CD8-positive, alpha-beta T cell (primary cell): ENCODE measurements at regions of chrX and their contacts with region 1.

Region 1: GRCh38 chrX:79146640-79147390 is 2.3 kb downstream of the GPR174 start:
- DNase-seq: peak in 2 of 9 experiments; percentile 36 to 63
- ATAC-seq: peak; percentile 6
- H3K4me3 ChIP-seq: peak overlapping the region; percentile 73 to 83
- H3K4me3 Mint-ChIP-seq: peak overlapping the region; percentile 97
- H3K27ac ChIP-seq: peak overlapping the region; percentile 67 to 83
- H3K27ac Mint-ChIP-seq: peak overlapping the region; percentile 97
- H3K4me1 ChIP-seq: peaks cover 31% of the 10 kb centered on the region
- H3K4me1 Mint-ChIP-seq: peaks cover 35% of the 10 kb centered on the region
- H3K27me3 ChIP-seq: no peaks in the 10 kb centered on the region
- H3K27me3 Mint-ChIP-seq: no peaks in the 10 kb centered on the region
- CTCF ChIP-seq: no peak

Region 2: GRCh38 chrX:79081895-79082512 is 64.8 kb before region 1 on chrX:
- CTCF ChIA-PET with region 1: interaction called, 4 read pairs
- POLR2A ChIA-PET with region 1: interaction called, 4 read pairs
- intact Hi-C with region 1: loop called in 1 of 2 experiments (anchors 2 kb)
- DNase-seq: peak in 6 of 9 experiments; percentile 6 to 79 (median 30)
- ATAC-seq: peak; percentile 89
- H3K4me3 ChIP-seq: no peak overlapping the region
- H3K4me3 Mint-ChIP-seq: peak overlapping the region; percentile 74
- H3K27ac ChIP-seq: peak overlapping the region in 1 of 2 experiments; percentile 9
- H3K27ac Mint-ChIP-seq: peak overlapping the region; percentile 94
- H3K4me1 ChIP-seq: peaks cover 27% of the 10 kb centered on the region
- H3K4me1 Mint-ChIP-seq: peaks cover 30% of the 10 kb centered on the region
- H3K27me3 ChIP-seq: no peaks in the 10 kb centered on the region
- H3K27me3 Mint-ChIP-seq: no peaks in the 10 kb centered on the region
- CTCF ChIP-seq: peak; percentile 54

Region 3: DNA sequence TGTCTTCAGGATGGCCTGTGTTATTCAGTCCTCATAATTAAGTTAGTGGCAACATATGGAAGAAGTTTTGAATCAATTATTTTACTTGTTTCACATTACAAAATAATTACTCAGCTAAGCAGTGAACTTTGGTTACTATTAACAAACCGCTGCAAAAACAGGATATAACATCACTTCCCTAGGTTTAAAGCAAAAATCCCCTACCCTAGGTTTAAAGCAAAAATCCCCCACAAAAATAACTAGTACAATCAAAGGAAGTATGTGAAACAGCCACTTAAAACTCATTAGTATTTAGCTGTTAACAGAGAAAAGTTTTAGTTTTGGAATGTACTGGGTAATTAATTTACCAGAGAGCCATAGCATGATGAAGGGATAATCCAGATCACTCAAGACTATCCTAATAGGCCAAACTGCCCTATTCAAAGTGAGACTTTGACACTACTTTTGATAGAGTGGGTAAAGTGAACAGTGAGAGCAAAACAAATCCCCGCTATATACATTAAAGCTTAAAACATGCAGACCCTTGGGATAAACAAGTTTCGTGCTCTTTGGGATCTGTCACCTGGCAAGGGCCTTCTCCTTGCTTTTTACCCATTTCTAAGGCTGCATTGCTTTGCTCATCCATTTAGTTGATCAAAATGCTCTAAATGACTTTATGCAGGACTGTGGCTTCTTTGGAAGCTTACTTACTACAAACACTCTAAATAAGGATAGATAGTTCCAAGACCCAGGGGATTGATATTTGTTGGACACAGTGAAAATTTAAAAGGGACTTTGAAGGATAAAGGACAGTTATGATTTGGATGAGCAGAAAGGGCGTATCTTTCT is 38.7 kb before region 1 on chrX:
- CTCF ChIA-PET with region 1: no interaction called
- POLR2A ChIA-PET with region 1: interaction called, 9 read pairs
- intact Hi-C with region 1: loop called (anchors 2 to 5 kb)
- DNase-seq: peak in 2 of 9 experiments; percentile 69 to 84
- ATAC-seq: peak; percentile 89
- H3K4me3 ChIP-seq: peak overlapping the region; percentile 15 to 20
- H3K4me3 Mint-ChIP-seq: peak overlapping the region; percentile 68
- H3K27ac ChIP-seq: peak overlapping the region; percentile 80 to 99
- H3K27ac Mint-ChIP-seq: peak overlapping the region; percentile 98
- H3K4me1 ChIP-seq: peaks cover 59% of the 10 kb centered on the region
- H3K4me1 Mint-ChIP-seq: peaks cover 57% of the 10 kb centered on the region
- H3K27me3 ChIP-seq: no peaks in the 10 kb centered on the region
- H3K27me3 Mint-ChIP-seq: no peaks in the 10 kb centered on the region
- CTCF ChIP-seq: no peak

Region 4: DNA sequence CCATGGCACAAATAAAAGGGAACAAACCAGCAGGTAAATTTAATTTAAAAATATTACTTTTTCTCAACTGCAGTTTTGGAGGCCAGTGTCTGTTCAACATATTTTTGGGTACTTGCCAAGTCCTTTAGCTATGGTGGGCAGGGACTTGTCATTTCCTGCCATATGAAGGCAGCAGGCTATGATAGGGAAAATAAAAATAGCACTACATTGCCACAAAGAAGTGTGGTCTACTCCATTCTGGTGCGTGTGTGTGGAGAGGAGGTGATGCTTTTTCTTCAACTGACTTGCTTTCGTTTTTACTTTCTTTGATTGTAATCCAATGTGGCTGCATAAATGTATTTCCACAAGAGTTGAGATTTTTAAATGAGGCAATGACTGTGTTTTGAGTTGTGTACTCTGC is 14.8 kb after region 1 on chrX:
- CTCF ChIA-PET with region 1: no interaction called
- POLR2A ChIA-PET with region 1: interaction called, 10 read pairs
- intact Hi-C with region 1: loop called in 1 of 2 experiments (anchors 2 kb)
- DNase-seq: peak in 8 of 9 experiments; percentile 14 to 91 (median 36)
- ATAC-seq: peak; percentile 87
- H3K4me3 ChIP-seq: peak overlapping the region; percentile 27 to 32
- H3K4me3 Mint-ChIP-seq: peak overlapping the region; percentile 85
- H3K27ac ChIP-seq: peak overlapping the region; percentile 58 to 83
- H3K27ac Mint-ChIP-seq: peak overlapping the region; percentile 97
- H3K4me1 ChIP-seq: peaks cover 70% of the 10 kb centered on the region
- H3K4me1 Mint-ChIP-seq: peaks cover 73% of the 10 kb centered on the region
- H3K27me3 ChIP-seq: no peaks in the 10 kb centered on the region
- H3K27me3 Mint-ChIP-seq: no peaks in the 10 kb centered on the region
- CTCF ChIP-seq: no peak

Region 5: GRCh38 chrX:79182616-79183015 is 35.8 kb after region 1 on chrX:
- CTCF ChIA-PET with region 1: no interaction called
- POLR2A ChIA-PET with region 1: no interaction called
- intact Hi-C with region 1: loop called in 1 of 2 experiments (anchors 5 kb)
- DNase-seq: no peak
- ATAC-seq: peak; percentile 46
- H3K4me3 ChIP-seq: no peak overlapping the region
- H3K4me3 Mint-ChIP-seq: peak overlapping the region; percentile 37
- H3K27ac ChIP-seq: peak overlapping the region in 1 of 2 experiments; percentile 63
- H3K27ac Mint-ChIP-seq: peak overlapping the region; percentile 89
- H3K4me1 ChIP-seq: peaks cover 40% of the 10 kb centered on the region
- H3K4me1 Mint-ChIP-seq: peaks cover 65% of the 10 kb centered on the region
- H3K27me3 ChIP-seq: no peaks in the 10 kb centered on the region
- H3K27me3 Mint-ChIP-seq: no peaks in the 10 kb centered on the region
- CTCF ChIP-seq: no peak

Region 6: DNA sequence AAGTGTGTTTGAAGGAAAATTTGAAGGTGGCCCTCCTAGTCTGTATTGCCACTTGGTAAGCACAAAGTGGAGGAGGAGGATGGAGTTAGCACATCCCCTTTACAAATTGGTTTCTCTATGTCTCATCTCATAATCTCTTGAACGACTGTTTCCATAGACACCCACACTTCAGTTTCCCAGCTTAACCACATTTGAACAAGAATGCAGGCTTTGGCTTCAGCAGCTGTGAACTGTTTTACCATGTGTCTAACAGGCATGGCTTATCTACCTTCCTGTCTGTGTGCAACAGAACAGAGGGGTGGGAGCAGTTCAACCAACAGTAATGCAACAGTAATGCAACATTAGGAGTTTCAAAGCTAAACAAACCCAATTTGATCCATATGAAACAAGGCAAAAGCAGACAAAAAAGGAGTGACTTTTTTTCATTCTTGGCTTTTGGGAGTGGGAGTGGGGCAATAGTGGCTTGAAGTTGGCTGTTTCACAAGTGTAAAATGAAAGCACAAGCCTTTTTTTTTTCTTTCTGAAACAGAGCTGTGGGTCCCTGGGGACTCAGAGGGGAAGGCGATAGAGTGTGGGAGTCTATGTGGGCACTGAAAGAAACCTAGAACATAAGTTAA is 112.4 kb after region 1 on chrX:
- CTCF ChIA-PET with region 1: interaction called, 8 read pairs
- POLR2A ChIA-PET with region 1: interaction called, 4 read pairs
- intact Hi-C with region 1: loop called in 1 of 2 experiments (anchors 5 kb)
- DNase-seq: peak; percentile 13 to 89 (median 40)
- ATAC-seq: peak; percentile 86
- H3K4me3 ChIP-seq: peak overlapping the region; percentile 22 to 36
- H3K4me3 Mint-ChIP-seq: peak overlapping the region; percentile 66
- H3K27ac ChIP-seq: peak overlapping the region; percentile 57 to 73
- H3K27ac Mint-ChIP-seq: peak overlapping the region; percentile 94
- H3K4me1 ChIP-seq: peaks cover 75% of the 10 kb centered on the region
- H3K4me1 Mint-ChIP-seq: peaks cover 81% of the 10 kb centered on the region
- H3K27me3 ChIP-seq: no peaks in the 10 kb centered on the region
- H3K27me3 Mint-ChIP-seq: no peaks in the 10 kb centered on the region
- CTCF ChIP-seq: no peak

Region 7: DNA sequence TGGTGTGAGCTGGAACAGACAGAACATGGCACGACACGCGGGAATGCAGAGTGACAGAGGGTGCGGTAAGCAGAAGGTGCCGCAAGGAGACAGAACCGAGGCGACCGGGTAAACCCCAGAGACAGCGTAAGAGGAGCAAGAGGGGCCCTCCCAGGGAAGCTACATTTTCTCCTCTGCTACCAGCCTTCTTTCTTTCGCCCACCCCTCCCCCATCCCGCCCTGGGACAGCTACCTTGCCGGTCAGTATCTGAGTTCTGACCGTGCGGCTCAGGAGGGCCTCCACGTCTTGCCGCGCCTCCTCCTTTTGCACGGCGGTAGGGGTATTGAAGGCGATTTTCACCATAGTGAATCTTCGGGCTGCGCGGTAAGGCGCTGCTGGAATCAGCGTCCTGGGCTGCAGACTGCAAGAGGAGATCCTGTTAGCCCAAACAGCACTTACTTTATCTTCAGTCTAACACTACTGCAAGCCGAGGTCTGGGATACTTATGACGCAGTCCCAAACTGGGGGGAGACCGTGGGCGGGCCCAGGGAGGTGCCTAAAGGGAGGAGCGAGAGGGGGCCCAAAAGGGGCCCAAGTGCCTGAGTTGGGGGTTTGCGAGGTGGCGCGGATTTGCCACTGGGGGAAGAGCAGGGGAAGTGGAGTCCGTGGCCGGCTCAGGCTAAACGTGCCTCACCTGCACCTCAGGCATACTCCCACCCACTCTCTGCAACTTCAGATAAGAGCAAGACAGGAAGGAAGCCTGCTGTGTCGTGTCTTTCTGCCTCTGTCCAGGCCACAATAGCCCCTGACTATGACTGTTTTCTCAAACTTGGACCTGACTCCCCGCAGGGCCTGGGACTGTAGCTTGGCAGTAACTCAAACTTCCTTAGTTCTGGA is 220.3 kb after region 1 on chrX and contains the start of gene ITM2A:
- CTCF ChIA-PET with region 1: no interaction called
- POLR2A ChIA-PET with region 1: no interaction called
- intact Hi-C with region 1: loop called in 1 of 2 experiments (anchors 10 kb)
- DNase-seq: peak; percentile 27 to 81 (median 64)
- ATAC-seq: peak; percentile 80
- H3K4me3 ChIP-seq: peak within 1 kb of the TSS; percentile 54 to 85
- H3K4me3 Mint-ChIP-seq: peak within 1 kb of the TSS; percentile 95
- H3K27ac ChIP-seq: peak within 1 kb of the TSS; percentile 79 to 94
- H3K27ac Mint-ChIP-seq: peak within 1 kb of the TSS; percentile 97
- H3K4me1 ChIP-seq: peaks cover 18% of the 10 kb centered on the region
- H3K4me1 Mint-ChIP-seq: peaks cover 39% of the 10 kb centered on the region
- H3K27me3 ChIP-seq: no peaks in the 10 kb centered on the region
- H3K27me3 Mint-ChIP-seq: no peaks in the 10 kb centered on the region
- CTCF ChIP-seq: no peak
- total RNA-seq, gene ITM2A: 123 to 125 TPM